ENCODE measurements at regions of chr6 and their contacts with region 1.

Region 1: DNA sequence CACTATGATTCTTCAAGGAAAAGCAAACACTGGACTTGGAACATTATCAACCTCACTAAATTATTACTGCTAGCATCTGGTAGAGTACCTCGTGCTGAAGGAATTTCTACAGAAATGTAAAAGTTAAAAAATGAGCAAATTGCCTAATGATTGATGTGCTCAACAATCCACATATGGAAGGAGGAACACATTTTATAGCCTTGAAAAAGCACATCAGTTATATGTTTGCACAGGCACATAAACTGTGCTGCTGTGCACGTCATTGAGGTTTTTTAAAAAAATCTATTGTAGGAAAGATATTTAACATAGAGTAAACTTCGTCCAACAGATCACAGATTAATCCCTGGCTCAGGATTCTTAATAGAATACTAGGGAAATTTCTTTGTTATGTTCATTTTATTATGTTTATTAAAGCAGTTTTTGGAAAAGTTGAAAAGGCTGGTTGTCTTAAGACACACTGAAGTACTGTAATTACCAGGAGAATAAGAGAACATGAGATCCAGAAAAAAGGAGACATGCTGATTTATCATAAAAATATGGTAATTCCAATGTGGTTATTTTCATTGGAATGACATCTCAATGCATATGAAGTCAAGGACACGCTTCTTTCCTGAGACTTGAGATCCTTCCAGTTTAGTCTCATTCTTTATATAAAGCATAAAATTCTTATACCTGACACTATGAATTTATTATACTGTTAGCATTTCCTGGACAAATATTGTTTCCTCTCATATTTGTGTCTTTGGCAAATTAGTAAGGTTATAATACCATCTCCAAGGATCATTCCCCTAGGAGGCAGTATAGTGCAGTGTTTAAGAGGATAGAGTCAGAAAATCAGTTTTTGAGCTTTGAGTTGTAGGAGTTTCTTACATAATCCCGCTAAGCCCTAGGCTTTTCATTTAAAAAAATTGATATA is 511.1 kb downstream of the TENT5A start:
- DNase-seq: peak; percentile 38
- ATAC-seq: peak; percentile 55
- H3K4me3 ChIP-seq: no peak overlapping the region
- H3K27ac ChIP-seq: no peak overlapping the region
- H3K4me1 ChIP-seq: no peaks in the 10 kb centered on the region
- H3K27me3 ChIP-seq: no peaks in the 10 kb centered on the region
- CTCF ChIP-seq: peak; percentile 62
- EP300 ChIP-seq: no peak
- POLR2A ChIP-seq: no peak
- RAD21 ChIP-seq: no peak

Region 2: GRCh38 chr6:80605165-80605989 is 636.0 kb before region 1 on chr6:
- CTCF ChIA-PET with region 1: no interaction called
- POLR2A ChIA-PET with region 1: no interaction called
- in situ Hi-C with region 1: no loop called
- intact Hi-C with region 1: loop called (anchors 1 kb)
- DNase-seq: peak; percentile 18
- ATAC-seq: peak; percentile 73
- H3K4me3 ChIP-seq: no peak overlapping the region
- H3K27ac ChIP-seq: no peak overlapping the region
- H3K4me1 ChIP-seq: no peaks in the 10 kb centered on the region
- H3K27me3 ChIP-seq: no peaks in the 10 kb centered on the region
- CTCF ChIP-seq: peak; percentile 51
- EP300 ChIP-seq: no peak
- POLR2A ChIP-seq: no peak
- RAD21 ChIP-seq: 0 out of 2 replicates have a peak, but pooled peaks have one; percentile 29

Region 3: GRCh38 chr6:81023007-81023582 is 218.3 kb before region 1 on chr6:
- CTCF ChIA-PET with region 1: no interaction called
- POLR2A ChIA-PET with region 1: no interaction called
- in situ Hi-C with region 1: no loop called
- intact Hi-C with region 1: no loop called
- DNase-seq: no peak
- ATAC-seq: no peak
- H3K4me3 ChIP-seq: no peak overlapping the region
- H3K27ac ChIP-seq: no peak overlapping the region
- H3K4me1 ChIP-seq: no peaks in the 10 kb centered on the region
- H3K27me3 ChIP-seq: no peaks in the 10 kb centered on the region
- CTCF ChIP-seq: no peak
- EP300 ChIP-seq: no peak
- POLR2A ChIP-seq: no peak
- RAD21 ChIP-seq: no peak

Region 4: GRCh38 chr6:81194374-81194773 is 47.0 kb before region 1 on chr6:
- CTCF ChIA-PET with region 1: no interaction called
- POLR2A ChIA-PET with region 1: no interaction called
- in situ Hi-C with region 1: no loop called
- intact Hi-C with region 1: no loop called
- DNase-seq: no peak
- ATAC-seq: no peak
- H3K4me3 ChIP-seq: no peak overlapping the region
- H3K27ac ChIP-seq: no peak overlapping the region
- H3K4me1 ChIP-seq: no peaks in the 10 kb centered on the region
- H3K27me3 ChIP-seq: no peaks in the 10 kb centered on the region
- CTCF ChIP-seq: no peak
- EP300 ChIP-seq: no peak
- POLR2A ChIP-seq: no peak
- RAD21 ChIP-seq: no peak

Region 5: GRCh38 chr6:81451787-81452186 is 210.4 kb after region 1 on chr6:
- CTCF ChIA-PET with region 1: no interaction called
- POLR2A ChIA-PET with region 1: no interaction called
- in situ Hi-C with region 1: loop called (anchors 25 kb)
- intact Hi-C with region 1: no loop called
- DNase-seq: peak; percentile 69
- ATAC-seq: peak; percentile 75
- H3K4me3 ChIP-seq: no peak overlapping the region
- H3K27ac ChIP-seq: no peak overlapping the region
- H3K4me1 ChIP-seq: peaks cover 7% of the 10 kb centered on the region; the same call in 1 of the 2 replicates
- H3K27me3 ChIP-seq: no peaks in the 10 kb centered on the region
- CTCF ChIP-seq: no peak
- EP300 ChIP-seq: peak in 1 of 2 experiments; percentile 4; a peak in 1 of 4 replicates
- POLR2A ChIP-seq: no peak
- RAD21 ChIP-seq: no peak

Region 6: GRCh38 chr6:81465859-81466258 is 224.5 kb after region 1 on chr6:
- CTCF ChIA-PET with region 1: interaction called, 9 read pairs
- POLR2A ChIA-PET with region 1: no interaction called
- in situ Hi-C with region 1: loop called (anchors 25 kb)
- intact Hi-C with region 1: loop called (anchors 1 kb)
- DNase-seq: peak; percentile 2
- ATAC-seq: peak; percentile 44; the same call in 1 of the 3 replicates
- H3K4me3 ChIP-seq: no peak overlapping the region
- H3K27ac ChIP-seq: no peak overlapping the region
- H3K4me1 ChIP-seq: no peaks in the 10 kb centered on the region
- H3K27me3 ChIP-seq: no peaks in the 10 kb centered on the region
- CTCF ChIP-seq: peak; percentile 57
- EP300 ChIP-seq: no peak
- POLR2A ChIP-seq: no peak
- RAD21 ChIP-seq: 0 out of 2 replicates have a peak, but pooled peaks have one; percentile 25

Region 7: DNA sequence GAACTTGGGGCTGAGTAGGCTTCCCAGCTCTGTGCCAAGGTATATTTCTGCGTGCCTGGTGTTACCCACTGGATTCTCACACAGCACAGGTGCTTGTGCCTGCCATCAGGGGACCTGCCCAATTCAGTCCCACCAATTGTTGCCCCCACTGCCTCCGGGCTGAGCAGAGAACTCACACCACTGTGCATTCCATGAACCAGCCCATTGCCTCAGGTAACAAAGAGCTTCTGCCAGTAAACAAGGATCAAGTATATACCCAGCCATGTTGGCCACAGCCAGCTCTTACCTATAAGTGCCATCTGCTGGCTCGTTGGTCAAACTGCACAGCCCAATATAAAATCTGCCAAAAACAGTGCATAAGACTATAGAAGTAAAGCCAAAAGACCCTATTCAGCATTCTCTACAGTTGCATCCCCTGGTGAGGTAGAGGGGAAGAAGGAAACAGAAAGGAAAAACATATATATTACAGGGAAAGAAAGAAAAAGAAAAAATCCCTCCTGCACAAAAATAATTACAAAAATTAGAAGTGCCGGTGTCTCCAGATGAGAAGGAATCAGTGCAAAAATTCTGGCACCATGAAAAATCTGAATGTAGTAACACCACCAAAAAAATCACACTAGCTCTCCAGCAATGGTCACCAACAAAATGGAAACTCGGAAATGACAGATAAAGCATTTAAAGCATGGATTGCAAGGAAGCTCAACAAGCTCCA is 764.8 kb after region 1 on chr6:
- CTCF ChIA-PET with region 1: no interaction called
- POLR2A ChIA-PET with region 1: no interaction called
- in situ Hi-C with region 1: loop called (anchors 25 kb)
- intact Hi-C with region 1: no loop called
- DNase-seq: peak; percentile 57
- ATAC-seq: peak; percentile 94
- H3K4me3 ChIP-seq: no peak overlapping the region
- H3K27ac ChIP-seq: no peak overlapping the region
- H3K4me1 ChIP-seq: 0 out of 2 replicates have a peak, but pooled peaks cover 4% of the 10 kb centered on the region
- H3K27me3 ChIP-seq: no peaks in the 10 kb centered on the region
- CTCF ChIP-seq: peak; percentile 84
- EP300 ChIP-seq: no peak
- POLR2A ChIP-seq: no peak
- RAD21 ChIP-seq: peak; percentile 78

Region 8: DNA sequence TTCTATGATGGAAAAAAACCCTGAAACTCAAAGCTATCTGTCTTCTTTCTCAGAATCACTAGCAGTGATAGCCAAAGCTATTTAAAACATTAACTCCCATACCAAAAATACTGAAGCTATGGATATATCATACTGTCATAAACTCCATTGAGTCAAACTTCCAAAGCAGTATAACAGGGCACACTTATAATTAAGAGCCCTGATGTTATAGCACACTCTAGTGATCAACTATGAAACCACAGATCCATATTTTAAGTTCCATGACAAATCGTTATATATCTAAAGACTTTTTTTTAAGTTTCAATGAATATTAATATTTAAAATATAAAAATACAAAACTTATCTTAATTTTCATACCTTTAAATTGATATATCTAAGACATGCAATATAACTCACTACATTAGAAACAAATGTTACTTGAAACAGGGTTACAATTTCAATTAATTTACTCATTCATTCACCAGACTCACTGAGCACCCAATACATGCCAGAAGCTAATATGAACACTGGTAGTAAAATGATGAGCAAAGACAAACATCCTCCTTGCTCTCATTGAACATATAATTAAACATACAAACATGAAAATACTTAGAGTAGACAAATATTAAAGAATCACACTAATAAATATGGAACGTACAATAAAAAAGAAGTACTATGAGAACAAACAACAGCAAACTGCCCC is 936.8 kb after region 1 on chr6:
- CTCF ChIA-PET with region 1: no interaction called
- POLR2A ChIA-PET with region 1: no interaction called
- in situ Hi-C with region 1: no loop called
- intact Hi-C with region 1: loop called (anchors 1 kb)
- DNase-seq: peak; percentile 5
- ATAC-seq: peak; percentile 43; the same call in 1 of the 3 replicates
- H3K4me3 ChIP-seq: no peak overlapping the region
- H3K27ac ChIP-seq: no peak overlapping the region
- H3K4me1 ChIP-seq: no peaks in the 10 kb centered on the region
- H3K27me3 ChIP-seq: no peaks in the 10 kb centered on the region
- CTCF ChIP-seq: peak; percentile 45; the same call in 1 of the 2 replicates
- EP300 ChIP-seq: no peak
- POLR2A ChIP-seq: no peak
- RAD21 ChIP-seq: no peak